ENCODE measurements at regions of chr1 and their contacts with region 1.

Region 1: DNA sequence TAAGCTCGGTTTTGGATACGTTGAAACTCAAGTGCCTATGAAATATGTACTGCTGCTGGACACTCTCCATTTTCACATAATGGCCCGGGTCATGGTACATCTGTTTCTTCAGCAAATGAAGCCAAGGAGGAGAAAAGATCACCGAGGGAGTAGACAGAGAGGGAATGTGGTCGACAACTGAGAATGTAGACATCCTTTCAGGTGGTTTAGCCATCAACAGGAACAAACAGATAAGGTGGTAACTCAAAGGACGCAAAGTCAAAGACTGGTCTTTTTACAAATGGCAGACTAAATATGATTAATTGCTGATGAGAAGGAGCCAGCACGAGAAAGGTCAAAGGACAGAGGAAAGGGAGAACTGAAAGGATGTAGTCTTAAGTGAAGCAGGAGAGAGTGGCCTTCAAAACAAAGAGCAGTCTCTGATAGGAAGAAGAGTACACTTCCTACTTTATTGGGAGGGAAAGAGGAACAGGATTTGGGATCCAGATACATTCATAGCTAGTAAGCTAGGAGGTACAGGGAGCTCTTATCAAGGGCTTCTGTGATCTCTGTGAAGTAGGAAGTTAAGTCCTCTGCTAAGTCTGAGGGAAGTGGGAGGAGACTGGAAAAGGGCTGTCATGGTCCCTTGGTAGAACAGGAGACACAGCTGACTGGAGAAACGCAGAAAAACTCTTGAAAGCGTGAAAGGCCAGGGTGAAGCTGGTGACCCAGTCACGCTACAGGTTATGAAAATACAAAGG is 28.3 kb downstream of the NUP133 start:
- DNase-seq: peak; percentile 87
- ATAC-seq: peak; percentile 79
- H3K4me3 ChIP-seq: peak overlapping the region in 1 of 5 experiments; percentile 48
- H3K4me3 Mint-ChIP-seq: peak overlapping the region; percentile 64
- H3K27ac ChIP-seq: peak overlapping the region; percentile 78 to 85
- H3K27ac Mint-ChIP-seq: peak overlapping the region; percentile 91
- H3K4me1 ChIP-seq: peaks cover 40 to 41% of the 10 kb centered on the region in 2 donors
- H3K4me1 Mint-ChIP-seq: peaks cover 45% of the 10 kb centered on the region
- H3K27me3 ChIP-seq: no peaks in the 10 kb centered on the region
- H3K27me3 Mint-ChIP-seq: no peaks in the 10 kb centered on the region
- CTCF ChIP-seq: no peak

Region 2: GRCh38 chr1:228664399-228664914 is 815.4 kb before region 1 on chr1:
- CTCF ChIA-PET with region 1: interaction called, 33 read pairs
- POLR2A ChIA-PET with region 1: no interaction called
- intact Hi-C with region 1: loop called (anchors 1 kb)
- DNase-seq: peak; percentile 79
- ATAC-seq: peak; percentile 43
- H3K4me3 ChIP-seq: no peak overlapping the region
- H3K4me3 Mint-ChIP-seq: no peak overlapping the region
- H3K27ac ChIP-seq: no peak overlapping the region
- H3K27ac Mint-ChIP-seq: no peak overlapping the region
- H3K4me1 ChIP-seq: no peaks in the 10 kb centered on the region
- H3K4me1 Mint-ChIP-seq: no peaks in the 10 kb centered on the region
- H3K27me3 ChIP-seq: peaks cover 0 to 8% (median 2%) of the 10 kb centered on the region in 4 experiments
- H3K27me3 Mint-ChIP-seq: peaks cover 22% of the 10 kb centered on the region
- CTCF ChIP-seq: peak; percentile 95

Region 3: GRCh38 chr1:229108531-229109201 is 371.2 kb before region 1 on chr1:
- CTCF ChIA-PET with region 1: no interaction called
- POLR2A ChIA-PET with region 1: no interaction called
- intact Hi-C with region 1: no loop called
- DNase-seq: no peak
- ATAC-seq: no peak
- H3K4me3 ChIP-seq: no peak overlapping the region
- H3K4me3 Mint-ChIP-seq: no peak overlapping the region
- H3K27ac ChIP-seq: no peak overlapping the region
- H3K27ac Mint-ChIP-seq: no peak overlapping the region
- H3K4me1 ChIP-seq: peaks cover 6 to 15% of the 10 kb centered on the region in 2 donors
- H3K4me1 Mint-ChIP-seq: peaks cover 2% of the 10 kb centered on the region
- H3K27me3 ChIP-seq: peaks cover 0 to 5% (median 0%) of the 10 kb centered on the region in 4 experiments
- H3K27me3 Mint-ChIP-seq: peaks cover 13% of the 10 kb centered on the region
- CTCF ChIP-seq: no peak

Region 4: DNA sequence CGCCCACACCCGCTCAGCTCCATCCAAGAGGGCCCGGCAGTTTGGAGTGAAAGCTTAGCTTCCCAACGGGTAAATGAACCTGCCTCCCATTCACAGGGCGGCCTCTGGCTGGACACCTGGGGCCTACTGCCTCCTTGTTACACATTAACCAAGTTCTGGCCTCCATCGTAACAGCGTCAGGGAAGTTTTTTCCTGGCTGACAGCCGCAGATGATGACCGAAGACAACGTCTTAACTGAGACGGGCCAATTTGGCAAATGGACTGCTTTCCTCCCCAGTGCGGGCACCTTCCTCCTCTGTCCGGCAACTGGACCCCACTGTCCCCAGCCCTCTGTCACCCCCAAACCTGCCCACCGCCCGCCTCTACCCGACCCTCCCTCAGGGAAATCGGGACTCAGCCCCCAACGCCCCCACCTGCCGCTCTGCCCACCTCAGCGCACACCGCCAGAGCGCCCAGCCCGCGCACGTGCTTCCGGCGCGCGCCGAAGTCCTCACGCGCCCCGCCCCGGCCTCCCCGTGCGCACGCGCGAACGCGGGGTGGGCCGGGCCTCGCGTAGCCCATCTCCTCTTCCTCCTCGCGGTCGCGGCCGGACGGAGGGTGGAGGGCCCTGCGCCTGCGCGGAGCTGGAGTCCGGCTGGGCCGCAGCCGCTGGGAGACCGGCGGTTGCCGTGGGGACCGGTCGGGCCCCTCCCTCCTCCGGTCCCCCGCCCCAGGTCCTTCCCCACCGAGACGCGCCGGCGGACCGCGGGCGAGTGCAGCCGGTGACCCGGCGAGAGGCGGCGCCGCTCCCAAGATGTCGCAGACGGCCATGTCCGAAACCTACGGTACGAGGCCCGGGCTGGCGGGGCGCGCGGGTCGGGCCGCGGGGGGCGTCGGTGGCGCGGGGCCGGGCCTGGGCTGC is 209.0 kb before region 1 on chr1 and contains the start of gene RAB4A:
- CTCF ChIA-PET with region 1: interaction called, 11 read pairs
- POLR2A ChIA-PET with region 1: interaction called, 7 read pairs
- intact Hi-C with region 1: no loop called
- DNase-seq: peak; percentile 90
- ATAC-seq: peak; percentile 90
- H3K4me3 ChIP-seq: peak within 1 kb of the TSS; percentile 59 to 89 (median 75)
- H3K4me3 Mint-ChIP-seq: peak within 1 kb of the TSS; percentile 96
- H3K27ac ChIP-seq: peak within 1 kb of the TSS; percentile 24 to 49
- H3K27ac Mint-ChIP-seq: peak within 1 kb of the TSS; percentile 85
- H3K4me1 ChIP-seq: peaks cover 16 to 22% of the 10 kb centered on the region in 2 donors
- H3K4me1 Mint-ChIP-seq: peaks cover 30% of the 10 kb centered on the region
- H3K27me3 ChIP-seq: no peaks in the 10 kb centered on the region
- H3K27me3 Mint-ChIP-seq: no peaks in the 10 kb centered on the region
- CTCF ChIP-seq: no peak
- total RNA-seq, gene RAB4A: 46.0 and 49.7 TPM in 2 replicates

Region 5: DNA sequence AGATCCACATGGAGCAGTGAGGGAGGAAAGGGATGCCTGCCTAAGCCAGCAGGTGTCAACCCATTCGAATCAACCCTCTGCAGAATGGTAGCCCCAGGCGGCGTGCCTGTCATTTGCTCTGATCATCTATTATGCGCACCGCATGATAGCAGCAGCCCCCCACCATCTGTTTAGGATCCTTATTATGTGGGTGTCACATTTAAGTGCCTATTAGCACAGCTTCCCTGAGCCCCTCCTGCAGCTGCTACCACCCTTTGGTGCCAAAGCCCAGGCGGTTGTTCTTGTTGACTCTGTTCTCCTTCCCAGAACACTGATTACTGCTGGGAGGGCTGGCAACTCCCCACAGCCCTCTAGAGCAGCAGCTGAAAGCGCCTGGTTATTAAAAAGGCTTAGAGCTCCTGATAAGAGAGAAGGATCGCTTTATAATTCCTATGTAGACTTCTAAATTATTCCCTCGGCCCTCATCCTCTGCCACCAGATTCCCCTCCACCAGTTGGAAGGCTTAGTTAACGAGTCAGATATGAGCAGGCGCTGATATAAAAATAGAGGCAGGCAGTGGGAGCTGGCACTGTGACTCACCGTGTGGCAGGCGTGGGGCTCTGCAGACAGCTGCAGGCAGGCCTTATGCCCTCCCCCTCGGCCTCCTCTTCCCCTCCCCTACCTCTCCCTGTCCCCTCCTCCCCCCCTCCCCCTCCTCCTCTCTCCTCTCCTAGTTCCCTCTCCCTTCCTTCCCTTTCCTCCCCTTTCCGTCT is 69.0 kb before region 1 on chr1:
- CTCF ChIA-PET with region 1: interaction called, 21 read pairs
- POLR2A ChIA-PET with region 1: no interaction called
- intact Hi-C with region 1: no loop called
- DNase-seq: no peak
- ATAC-seq: peak; percentile 28
- H3K4me3 ChIP-seq: no peak overlapping the region
- H3K4me3 Mint-ChIP-seq: no peak overlapping the region
- H3K27ac ChIP-seq: no peak overlapping the region
- H3K27ac Mint-ChIP-seq: peak overlapping the region; percentile 43
- H3K4me1 ChIP-seq: peaks cover 12 to 15% of the 10 kb centered on the region in 2 donors
- H3K4me1 Mint-ChIP-seq: peaks cover 18% of the 10 kb centered on the region
- H3K27me3 ChIP-seq: peaks cover 0 to 45% (median 23%) of the 10 kb centered on the region in 4 experiments
- H3K27me3 Mint-ChIP-seq: peaks cover 36% of the 10 kb centered on the region
- CTCF ChIP-seq: no peak

Region 6: DNA sequence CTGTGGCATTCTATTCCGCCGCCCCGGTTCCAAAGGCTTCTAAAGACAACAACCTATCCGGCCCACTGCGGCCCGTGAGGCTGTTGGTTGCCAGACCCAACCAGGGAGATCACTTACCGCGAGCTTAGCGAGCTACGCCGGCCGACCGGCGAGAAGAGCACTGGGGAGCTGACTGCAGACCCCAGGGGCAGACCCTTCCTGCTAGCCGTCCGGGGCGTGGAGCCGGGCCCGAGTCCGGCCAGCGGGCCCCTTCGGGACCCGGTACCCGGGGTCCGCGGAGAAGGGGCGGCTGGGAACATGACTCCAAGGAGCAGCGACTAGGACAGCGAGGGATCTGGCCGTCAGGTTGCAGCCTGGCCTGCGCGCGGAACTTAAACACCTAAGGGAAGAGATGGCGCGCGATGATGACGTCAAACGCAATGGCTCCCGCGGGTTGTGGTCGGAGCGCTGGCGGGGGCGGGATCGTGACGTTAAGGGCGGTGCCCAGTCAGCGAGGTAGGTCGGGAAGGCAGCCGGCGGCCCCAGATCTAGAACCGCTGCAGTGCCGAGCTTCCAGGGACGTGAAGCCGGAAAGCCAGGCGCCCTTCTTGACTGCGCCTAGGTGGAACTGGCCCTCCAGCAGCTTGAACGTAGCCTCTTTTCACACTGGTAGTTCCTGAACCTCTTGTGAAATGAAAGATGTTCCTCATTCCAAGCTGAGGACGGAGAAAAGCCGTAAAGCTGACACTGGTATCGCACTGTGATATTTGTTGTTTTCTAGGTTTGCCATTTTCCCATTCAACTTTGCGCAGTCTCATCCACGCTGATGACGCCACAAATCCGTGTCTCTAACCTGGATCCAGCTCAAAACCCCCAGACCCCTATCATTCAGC is 28.4 kb after region 1 on chr1 and contains the start of gene NUP133:
- CTCF ChIA-PET with region 1: interaction called, 27 read pairs
- POLR2A ChIA-PET with region 1: interaction called, 9 read pairs
- intact Hi-C with region 1: loop called (anchors 1 kb)
- DNase-seq: peak; percentile 99
- ATAC-seq: peak; percentile 95
- H3K4me3 ChIP-seq: peak within 1 kb of the TSS; percentile 87 to 99 (median 92)
- H3K4me3 Mint-ChIP-seq: peak within 1 kb of the TSS; percentile 96
- H3K27ac ChIP-seq: peak within 1 kb of the TSS; percentile 93 to 94
- H3K27ac Mint-ChIP-seq: peak within 1 kb of the TSS; percentile 99
- H3K4me1 ChIP-seq: peaks cover 14 to 17% of the 10 kb centered on the region in 2 donors
- H3K4me1 Mint-ChIP-seq: peaks cover 23% of the 10 kb centered on the region
- H3K27me3 ChIP-seq: no peaks in the 10 kb centered on the region
- H3K27me3 Mint-ChIP-seq: no peaks in the 10 kb centered on the region
- CTCF ChIP-seq: no peak
- total RNA-seq, gene NUP133: 49.7 and 50.5 TPM in 2 replicates

Region 7: GRCh38 chr1:229558571-229559335 is 78.9 kb after region 1 on chr1 and contains the start of gene ABCB10:
- CTCF ChIA-PET with region 1: interaction called, 10 read pairs
- POLR2A ChIA-PET with region 1: interaction called, 3 read pairs
- intact Hi-C with region 1: no loop called
- DNase-seq: peak; percentile 95
- ATAC-seq: peak; percentile 82
- H3K4me3 ChIP-seq: peak within 1 kb of the TSS; percentile 65 to 85 (median 69)
- H3K4me3 Mint-ChIP-seq: peak within 1 kb of the TSS; percentile 96
- H3K27ac ChIP-seq: peak within 1 kb of the TSS; percentile 43 to 68
- H3K27ac Mint-ChIP-seq: peak within 1 kb of the TSS; percentile 90
- H3K4me1 ChIP-seq: peaks cover 16 to 18% of the 10 kb centered on the region in 2 donors
- H3K4me1 Mint-ChIP-seq: peaks cover 32% of the 10 kb centered on the region
- H3K27me3 ChIP-seq: no peaks in the 10 kb centered on the region
- H3K27me3 Mint-ChIP-seq: no peaks in the 10 kb centered on the region
- CTCF ChIP-seq: peak; percentile 60
- total RNA-seq, gene ABCB10: 17.0 and 18.6 TPM in 2 replicates